ENCODE measurements at regions of chr16 and their contacts with region 1.

Region 1: GRCh38 chr16:83952940-83953795 is at the start of gene OSGIN1:
- DNase-seq: no peak
- ATAC-seq: peak; percentile 18; the same call in 1 of the 2 replicates
- H3K4me3 Mint-ChIP-seq: peak within 1 kb of the TSS; percentile 53
- H3K27ac Mint-ChIP-seq: no peak within 1 kb of the TSS
- H3K4me1 Mint-ChIP-seq: peaks cover 8% of the 10 kb centered on the region
- H3K27me3 Mint-ChIP-seq: no peaks in the 10 kb centered on the region
- CTCF ChIP-seq: no peak
- total RNA-seq, gene OSGIN1: 0.73 to 1.7 TPM (median 1.1 TPM) in 3 replicates

Region 2: GRCh38 chr16:83933885-83934683 is 19.1 kb before region 1 on chr16:
- CTCF ChIA-PET with region 1: interaction called, 13 read pairs
- POLR2A ChIA-PET with region 1: no interaction called
- DNase-seq: no peak
- ATAC-seq: no peak
- H3K4me3 Mint-ChIP-seq: no peak overlapping the region
- H3K27ac Mint-ChIP-seq: peak overlapping the region; percentile 23; the same call in 1 of the 2 replicates
- H3K4me1 Mint-ChIP-seq: no peaks in the 10 kb centered on the region
- H3K27me3 Mint-ChIP-seq: no peaks in the 10 kb centered on the region; the same call in 1 of the 2 replicates
- CTCF ChIP-seq: no peak

Region 3: GRCh38 chr16:83964684-83965443 is 11.7 kb after region 1 on chr16:
- CTCF ChIA-PET with region 1: interaction called, 36 read pairs
- POLR2A ChIA-PET with region 1: no interaction called
- DNase-seq: no peak
- ATAC-seq: no peak
- H3K4me3 Mint-ChIP-seq: no peak overlapping the region
- H3K27ac Mint-ChIP-seq: no peak overlapping the region
- H3K4me1 Mint-ChIP-seq: peaks cover 5% of the 10 kb centered on the region
- H3K27me3 Mint-ChIP-seq: peaks cover 9% of the 10 kb centered on the region
- CTCF ChIP-seq: no peak

Region 4: DNA sequence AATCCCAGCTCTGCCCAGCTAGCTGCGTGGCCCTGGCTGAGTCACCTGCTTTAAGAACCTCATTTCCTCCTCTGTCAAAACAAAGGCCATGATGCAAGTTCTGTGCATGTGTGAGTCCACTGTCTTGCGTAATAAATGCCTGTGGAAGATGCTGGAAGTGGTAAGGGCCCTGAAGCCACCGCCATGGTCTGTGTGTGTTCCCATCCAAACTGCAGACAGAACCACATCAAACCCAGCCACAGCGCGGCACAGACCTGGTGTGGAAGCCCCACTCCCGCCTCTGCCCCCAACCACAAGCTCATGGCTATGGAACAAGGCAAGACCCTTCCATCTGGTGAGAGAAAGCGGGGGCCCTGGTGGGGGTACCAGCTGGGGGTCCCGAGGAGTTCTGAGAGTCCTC is 40.9 kb after region 1 on chr16:
- CTCF ChIA-PET with region 1: interaction called, 22 read pairs
- POLR2A ChIA-PET with region 1: no interaction called
- DNase-seq: no peak
- ATAC-seq: no peak
- H3K4me3 Mint-ChIP-seq: no peak overlapping the region
- H3K27ac Mint-ChIP-seq: no peak overlapping the region
- H3K4me1 Mint-ChIP-seq: peaks cover 6% of the 10 kb centered on the region
- H3K27me3 Mint-ChIP-seq: no peaks in the 10 kb centered on the region
- CTCF ChIP-seq: no peak

Region 5: GRCh38 chr16:84027625-84028024 is 74.5 kb after region 1 on chr16:
- CTCF ChIA-PET with region 1: interaction called, 11 read pairs
- POLR2A ChIA-PET with region 1: no interaction called
- DNase-seq: no peak
- ATAC-seq: no peak
- H3K4me3 Mint-ChIP-seq: no peak overlapping the region
- H3K27ac Mint-ChIP-seq: no peak overlapping the region
- H3K4me1 Mint-ChIP-seq: peaks cover 15% of the 10 kb centered on the region
- H3K27me3 Mint-ChIP-seq: no peaks in the 10 kb centered on the region
- CTCF ChIP-seq: no peak

Region 6: DNA sequence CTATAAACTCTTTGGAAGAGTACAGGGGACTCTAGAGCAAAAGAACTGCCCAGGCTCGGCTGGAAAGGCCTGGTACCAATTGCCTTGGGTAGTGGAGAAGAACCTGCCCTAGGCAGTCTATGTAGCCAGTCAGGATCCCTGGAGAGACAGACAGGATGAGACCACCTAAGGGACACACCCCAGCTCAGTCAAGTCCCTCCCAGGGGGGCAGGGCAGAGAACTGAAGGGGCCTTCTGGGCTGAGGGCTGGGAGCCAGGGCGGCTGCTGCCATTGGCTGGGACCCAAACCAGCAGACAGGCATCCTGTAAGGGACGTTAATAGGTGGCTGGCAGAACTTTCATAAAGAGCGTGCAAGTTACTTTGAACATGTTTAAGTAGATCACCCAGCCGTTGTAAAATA is 102.2 kb after region 1 on chr16:
- CTCF ChIA-PET with region 1: interaction called, 10 read pairs
- POLR2A ChIA-PET with region 1: no interaction called
- DNase-seq: no peak
- ATAC-seq: no peak
- H3K4me3 Mint-ChIP-seq: no peak overlapping the region
- H3K27ac Mint-ChIP-seq: no peak overlapping the region
- H3K4me1 Mint-ChIP-seq: no peaks in the 10 kb centered on the region
- H3K27me3 Mint-ChIP-seq: no peaks in the 10 kb centered on the region
- CTCF ChIP-seq: no peak

Region 7: DNA sequence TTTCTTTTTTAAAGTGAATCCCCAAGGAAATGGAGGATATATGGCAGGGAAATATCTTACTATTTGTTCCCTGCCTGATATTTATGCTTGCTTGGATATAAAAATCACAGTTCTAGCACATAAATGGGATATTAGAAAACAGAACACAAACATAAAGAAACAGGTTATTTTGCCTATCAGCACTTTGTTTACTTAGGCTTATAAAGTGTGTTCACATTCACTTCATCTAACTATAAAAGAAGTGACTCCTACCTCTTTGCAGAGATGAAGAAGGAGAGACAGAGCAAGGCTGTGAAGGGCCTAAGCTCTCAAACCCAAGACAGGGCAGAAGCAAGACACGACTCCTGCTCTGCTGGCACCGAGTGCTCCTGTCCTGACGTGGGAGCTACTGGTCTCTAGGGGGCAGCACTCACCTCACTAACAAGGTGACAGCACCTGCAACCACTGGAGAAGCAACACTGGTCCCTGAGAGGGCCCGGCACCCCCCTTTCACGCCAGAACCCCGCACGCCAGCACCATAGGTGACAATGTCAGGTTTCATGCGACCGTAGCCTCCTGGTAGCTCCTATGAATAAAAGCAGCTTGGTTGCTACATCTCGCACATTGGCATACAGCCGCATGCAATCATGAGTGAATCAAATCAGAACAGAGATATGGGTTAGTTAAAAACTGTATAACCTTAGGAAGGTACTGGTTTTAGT is 131.6 kb after region 1 on chr16:
- CTCF ChIA-PET with region 1: interaction called, 12 read pairs
- POLR2A ChIA-PET with region 1: no interaction called
- DNase-seq: peak; percentile 81
- ATAC-seq: peak; percentile 98
- H3K4me3 Mint-ChIP-seq: no peak overlapping the region
- H3K27ac Mint-ChIP-seq: no peak overlapping the region
- H3K4me1 Mint-ChIP-seq: no peaks in the 10 kb centered on the region
- H3K27me3 Mint-ChIP-seq: no peaks in the 10 kb centered on the region
- CTCF ChIP-seq: peak; percentile 73

Measured in WTC11 (cell line).